Right cardiac atrium (tissue), 5 donors: ENCODE measurements at regions of chr16 and their contacts with region 1.

Region 1: DNA sequence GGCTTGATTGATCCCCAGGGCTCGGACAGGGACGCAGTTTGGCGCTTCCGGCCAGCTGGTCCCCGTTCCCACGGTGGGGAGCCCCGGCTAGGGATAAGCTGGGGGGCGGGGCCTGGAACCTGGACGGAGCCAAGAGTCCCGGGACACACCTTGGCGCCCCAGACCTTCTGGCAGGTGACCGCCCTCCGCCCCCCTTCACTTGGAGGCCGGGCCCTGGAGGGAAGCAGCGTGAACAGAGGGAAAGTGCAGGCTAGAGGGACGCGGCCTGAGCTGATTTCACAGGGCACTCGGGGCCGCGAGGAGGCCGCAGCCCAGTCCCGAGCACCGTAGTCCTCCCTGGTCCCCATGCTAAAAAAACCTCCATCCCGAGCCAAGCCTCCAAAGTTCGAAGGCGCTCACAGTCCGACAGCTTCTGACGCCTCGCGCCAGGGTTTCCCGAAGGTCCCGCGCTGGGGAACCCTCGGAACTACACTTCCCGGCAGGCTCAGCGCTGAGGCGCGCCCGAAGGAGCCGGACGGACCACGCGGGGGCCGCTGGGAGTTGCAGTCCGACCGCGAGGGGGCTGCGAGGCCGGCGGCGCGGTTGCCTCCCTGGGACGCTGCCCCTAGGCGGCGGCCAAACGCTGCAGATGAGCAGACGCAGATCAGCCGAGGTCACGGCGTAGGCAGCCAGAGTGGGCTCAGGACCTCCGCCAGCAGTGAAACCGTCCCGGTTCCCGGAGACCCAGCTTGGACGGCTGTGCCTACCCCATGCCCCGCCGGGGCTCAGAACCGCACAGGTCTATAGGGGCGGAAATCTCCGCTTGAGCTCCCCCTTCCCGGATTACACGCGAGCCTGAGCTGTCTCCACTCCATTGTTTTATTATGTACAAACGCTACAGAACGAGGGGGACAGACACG is at the start of gene TBX6:
- DNase-seq: peak; percentile 96 to 98 (median 97)
- ATAC-seq: peak; percentile 92 to 93
- H3K4me3 ChIP-seq: peak within 1 kb of the TSS; percentile 36
- H3K27ac ChIP-seq: peak within 1 kb of the TSS; percentile 72
- H3K4me1 ChIP-seq: peaks cover 2% of the 10 kb centered on the region
- H3K27me3 ChIP-seq: no peaks in the 10 kb centered on the region
- total RNA-seq, gene TBX6: 0.67 to 1.2 (median 1.0) TPM

Region 2: DNA sequence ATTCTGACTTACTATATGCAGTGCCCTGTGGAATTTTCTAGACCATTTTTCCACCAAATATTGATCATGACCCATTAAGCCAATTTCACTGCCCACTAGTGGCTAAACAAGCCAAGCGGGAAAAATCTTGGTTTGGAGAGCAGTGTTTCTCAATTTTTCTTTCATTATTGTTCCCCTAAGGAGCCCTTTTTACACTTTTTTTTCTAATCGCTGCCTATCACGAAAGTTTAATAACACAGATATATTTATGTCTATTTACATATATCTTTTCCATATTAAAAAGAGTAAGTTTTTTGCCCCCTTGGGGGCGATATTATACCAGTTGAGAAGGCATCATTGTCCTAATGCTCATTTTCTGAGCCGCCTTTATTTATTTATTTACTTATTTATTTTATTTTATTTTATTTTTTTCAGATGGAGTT is 49.9 kb before region 1 on chr16:
- intact Hi-C with region 1: loop called in 1 of 4 experiments (anchors 5 kb)
- DNase-seq: no peak
- ATAC-seq: no peak
- H3K4me3 ChIP-seq: no peak overlapping the region
- H3K27ac ChIP-seq: no peak overlapping the region
- H3K4me1 ChIP-seq: no peaks in the 10 kb centered on the region
- H3K27me3 ChIP-seq: no peaks in the 10 kb centered on the region

Region 3: DNA sequence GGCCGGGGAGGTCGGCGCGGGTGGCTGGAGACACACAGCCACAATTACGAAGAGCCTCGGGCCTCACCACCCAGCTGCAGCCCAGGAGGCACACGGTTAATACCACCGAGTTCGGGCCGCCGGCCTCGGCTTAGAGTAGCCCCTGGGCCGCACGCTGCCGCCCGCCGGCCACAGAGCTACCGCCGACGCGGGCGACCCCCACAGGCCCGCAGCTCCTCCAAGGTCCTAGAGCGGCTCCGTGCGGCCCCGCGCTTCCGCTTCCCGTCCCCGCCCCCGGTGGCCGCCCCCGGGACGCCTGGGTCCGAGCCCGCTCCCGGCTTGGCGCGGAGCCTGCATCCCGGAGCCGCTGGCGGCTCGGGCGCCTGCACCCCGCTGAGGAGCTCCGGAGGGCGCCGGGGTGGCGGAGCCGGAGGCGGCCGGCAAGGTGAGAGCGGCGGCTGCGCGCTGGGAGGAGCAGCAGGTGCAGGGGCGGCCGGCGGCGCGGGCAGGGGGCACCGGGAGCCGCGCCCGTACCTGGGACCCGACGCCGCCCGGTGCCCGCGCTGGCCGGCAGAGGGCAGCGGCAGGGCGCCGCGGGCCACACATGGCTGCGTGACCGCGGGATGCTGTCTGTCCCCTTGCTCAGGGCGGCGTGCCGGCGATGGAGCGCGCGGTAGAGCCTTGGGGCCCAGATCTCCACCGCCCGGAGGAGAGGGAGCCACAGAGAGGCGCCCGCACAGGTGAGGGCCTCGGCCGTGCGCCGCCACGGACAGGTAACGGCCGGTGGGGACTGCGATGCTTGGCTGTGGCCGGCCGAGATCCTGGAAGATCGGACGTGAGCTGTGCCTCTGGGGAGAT is 303.6 kb after region 1 on chr16 and contains the start of gene ZNF48:
- intact Hi-C with region 1: loop called in 1 of 4 experiments (anchors 10 kb)
- DNase-seq: peak; percentile 93 to 96 (median 96)
- ATAC-seq: peak; percentile 97 to 98
- H3K4me3 ChIP-seq: peak within 1 kb of the TSS; percentile 86
- H3K27ac ChIP-seq: peak within 1 kb of the TSS; percentile 96
- H3K4me1 ChIP-seq: no peaks in the 10 kb centered on the region
- H3K27me3 ChIP-seq: no peaks in the 10 kb centered on the region
- total RNA-seq, gene ZNF48: 6.2 to 8.0 (median 7.5) TPM